ENCODE measurements at regions of chr1 and their contacts with region 1.

Region 1: DNA sequence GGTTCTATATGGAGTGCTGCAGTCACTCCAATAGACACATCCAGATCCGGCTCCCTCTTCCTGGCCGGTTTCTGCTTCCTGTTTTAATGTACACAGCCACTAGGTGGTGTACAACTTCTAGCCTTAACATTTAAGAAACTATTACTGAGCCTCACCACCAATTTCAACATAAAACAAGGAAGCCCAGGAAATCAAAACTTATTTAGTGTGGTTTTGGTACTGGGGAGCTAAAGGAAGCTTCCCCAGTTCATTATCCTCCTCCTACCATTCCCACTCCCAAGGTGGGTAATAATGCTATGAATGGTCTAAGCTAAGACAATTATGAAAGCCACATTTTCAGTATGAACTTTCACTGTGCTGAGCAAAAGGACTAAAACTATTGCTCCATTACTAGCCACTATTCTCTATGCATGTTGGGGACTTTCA is 25.5 kb upstream of the MTMR11 start:
- DNase-seq: peak; percentile 65
- H3K4me3 ChIP-seq: no peak overlapping the region
- H3K27ac ChIP-seq: no peak overlapping the region
- H3K4me1 ChIP-seq: no peaks in the 10 kb centered on the region
- H3K27me3 ChIP-seq: no peaks in the 10 kb centered on the region
- CTCF ChIP-seq: peak; percentile 63 to 72

Region 2: DNA sequence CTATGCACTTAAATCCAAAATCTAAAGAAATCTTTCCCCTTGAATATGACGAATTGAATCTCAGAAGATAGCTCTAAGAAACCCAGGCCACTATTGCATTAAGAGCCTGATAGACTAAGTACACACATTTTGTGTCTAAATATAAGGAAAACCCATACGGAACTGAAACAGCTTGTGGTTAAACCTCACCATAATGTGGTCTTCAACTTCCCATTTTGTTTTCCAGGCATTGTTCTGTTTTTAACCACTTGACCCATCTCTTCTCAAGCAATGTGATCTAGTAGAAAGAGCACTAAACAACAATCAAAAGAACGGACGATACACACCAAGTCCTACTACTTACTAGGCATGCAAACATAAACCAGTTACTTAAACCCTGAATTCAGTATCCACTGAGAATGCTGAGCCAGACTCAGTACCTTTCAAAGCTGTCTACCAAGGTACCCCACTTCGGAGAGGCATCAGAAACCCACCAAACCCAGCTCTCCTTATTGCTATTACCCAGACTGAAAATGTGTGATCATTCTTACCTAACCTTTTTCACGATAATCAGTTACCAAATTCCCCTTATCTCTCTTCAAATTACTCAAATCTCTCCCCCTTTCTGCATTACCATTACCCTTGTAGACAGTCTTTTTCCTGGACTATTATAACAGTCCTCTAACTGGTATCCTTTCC is 35.6 kb after region 1 on chr1:
- CTCF ChIA-PET with region 1: no interaction called
- dilution Hi-C with region 1: loop called (anchors 5 kb)
- in situ Hi-C with region 1: no loop called
- intact Hi-C with region 1: no loop called
- DNase-seq: no peak
- H3K4me3 ChIP-seq: no peak overlapping the region
- H3K27ac ChIP-seq: no peak overlapping the region
- H3K4me1 ChIP-seq: peaks cover 21% of the 10 kb centered on the region
- H3K27me3 ChIP-seq: no peaks in the 10 kb centered on the region
- CTCF ChIP-seq: no peak

Region 3: DNA sequence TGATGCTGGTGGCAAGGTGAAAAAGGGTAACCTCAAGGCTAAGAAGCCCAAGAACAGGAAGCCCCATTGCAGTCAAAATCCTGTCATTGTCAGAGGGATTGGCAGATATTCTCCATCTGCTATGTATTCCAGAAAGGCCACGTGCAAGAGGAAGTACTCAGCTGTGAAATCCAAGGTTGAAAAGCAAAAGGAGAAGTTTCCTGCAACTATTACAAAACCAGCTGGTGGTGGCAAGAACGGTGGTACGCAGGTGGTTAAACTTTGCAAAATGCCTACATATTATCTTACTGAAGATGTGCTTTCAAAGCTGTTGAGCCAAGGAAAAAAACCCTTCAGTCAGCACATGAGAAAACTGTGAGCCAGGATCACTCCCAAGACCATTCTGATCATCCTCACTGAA is 91.8 kb after region 1 on chr1:
- CTCF ChIA-PET with region 1: interaction called, 11 read pairs
- dilution Hi-C with region 1: no loop called
- in situ Hi-C with region 1: loop called (anchors 5 kb)
- intact Hi-C with region 1: loop called (anchors 1 kb)
- DNase-seq: no peak
- H3K4me3 ChIP-seq: no peak overlapping the region
- H3K27ac ChIP-seq: no peak overlapping the region
- H3K4me1 ChIP-seq: no peaks in the 10 kb centered on the region
- H3K27me3 ChIP-seq: no peaks in the 10 kb centered on the region
- CTCF ChIP-seq: no peak

Region 4: DNA sequence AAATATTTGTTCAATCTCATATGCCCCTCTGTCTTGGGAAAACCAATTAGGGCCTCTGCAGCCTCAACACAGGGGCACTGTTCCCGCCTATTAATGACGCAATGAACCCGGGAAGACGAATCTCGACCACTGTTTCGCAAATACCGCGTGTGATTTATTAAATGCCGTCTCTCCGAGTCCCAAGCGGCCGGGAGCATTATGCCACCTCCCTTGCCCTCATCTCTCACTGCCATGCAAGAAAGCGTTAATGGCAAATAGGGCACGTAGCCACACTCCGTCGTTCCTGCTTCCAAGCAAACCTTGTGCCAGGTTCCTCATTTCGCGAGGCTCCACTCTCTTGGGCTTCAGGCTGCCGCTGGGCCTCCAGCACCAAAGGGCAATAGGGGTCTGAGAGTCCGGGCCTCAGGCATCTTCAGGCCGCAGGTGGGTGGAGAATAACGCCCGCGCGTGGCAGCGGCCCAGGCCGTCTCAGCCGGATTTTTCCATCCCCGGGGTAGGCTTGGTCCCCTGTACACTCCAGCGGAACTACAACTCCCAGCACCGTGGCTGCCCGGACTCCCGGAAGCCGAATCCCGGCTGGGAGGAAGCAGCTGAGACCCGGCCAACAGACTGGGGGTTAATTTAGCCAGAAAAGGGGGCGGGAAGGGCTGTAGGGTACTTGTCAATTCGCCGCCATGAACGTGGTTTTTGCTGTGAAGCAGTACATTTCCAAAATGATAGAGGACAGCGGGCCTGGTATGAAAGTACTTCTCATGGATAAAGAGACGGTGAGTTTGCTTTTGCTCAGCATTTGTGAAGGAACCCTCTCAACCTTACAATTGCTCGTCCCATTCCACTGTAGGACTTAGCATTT is 105.3 kb after region 1 on chr1 and contains the start of gene VPS45:
- CTCF ChIA-PET with region 1: interaction called, 4 read pairs
- dilution Hi-C with region 1: loop called (anchors 5 kb)
- in situ Hi-C with region 1: no loop called
- intact Hi-C with region 1: loop called (anchors 5 kb)
- DNase-seq: peak; percentile 86
- H3K4me3 ChIP-seq: peak within 1 kb of the TSS; percentile 68 to 81 (median 73)
- H3K27ac ChIP-seq: peak within 1 kb of the TSS; percentile 83
- H3K4me1 ChIP-seq: peaks cover 15% of the 10 kb centered on the region
- H3K27me3 ChIP-seq: no peaks in the 10 kb centered on the region
- CTCF ChIP-seq: no peak
- total RNA-seq, gene VPS45: 30.0 to 42.2 TPM

Region 5: DNA sequence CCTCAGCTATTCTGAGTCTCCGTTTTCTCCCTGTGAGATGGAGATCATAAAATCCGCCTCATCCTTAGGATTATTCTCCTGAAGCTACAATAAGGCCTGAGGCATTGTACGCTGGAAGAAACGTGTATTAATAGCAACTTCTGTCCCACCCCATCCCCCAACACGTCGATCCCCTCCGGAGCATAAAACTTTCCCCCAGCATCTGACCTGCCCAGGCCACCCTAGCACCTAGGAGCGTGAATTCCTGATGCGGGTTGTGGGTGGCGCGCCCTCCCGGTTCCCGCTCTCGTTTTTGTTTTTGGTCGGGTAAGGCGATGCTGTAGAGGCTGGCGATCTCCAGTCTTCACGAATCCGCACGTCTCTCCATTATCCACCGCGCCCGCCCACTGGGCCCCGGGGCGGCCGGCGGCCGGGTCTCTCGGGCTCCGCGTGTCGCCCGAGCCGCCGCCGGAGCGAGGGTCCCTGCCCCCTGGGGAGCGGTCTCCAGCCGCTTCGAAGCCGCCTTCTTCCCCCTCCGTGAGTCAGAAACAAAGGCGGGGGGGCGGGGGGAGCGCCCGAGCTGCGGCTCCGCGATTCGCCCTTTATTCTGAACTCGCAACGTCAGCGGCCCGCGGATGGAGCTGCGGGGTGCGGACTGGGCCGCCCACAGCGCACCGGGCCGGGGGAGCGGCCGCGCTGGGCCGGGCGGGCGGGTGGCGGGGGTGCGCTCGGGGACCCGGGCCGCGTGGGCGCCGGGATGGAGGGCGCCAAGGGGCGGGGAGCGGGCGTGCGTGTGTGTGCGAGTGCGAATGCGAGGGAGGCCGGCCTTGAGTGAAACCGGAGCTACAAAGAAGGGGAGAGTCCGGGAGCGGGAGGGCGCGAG is 187.4 kb after region 1 on chr1 and contains the start of gene PLEKHO1:
- CTCF ChIA-PET with region 1: no interaction called
- dilution Hi-C with region 1: no loop called
- in situ Hi-C with region 1: no loop called
- intact Hi-C with region 1: no loop called
- DNase-seq: peak; percentile 71
- H3K4me3 ChIP-seq: peak within 1 kb of the TSS; percentile 58 to 61 (median 60)
- H3K27ac ChIP-seq: no peak within 1 kb of the TSS
- H3K4me1 ChIP-seq: peaks cover 7% of the 10 kb centered on the region
- H3K27me3 ChIP-seq: no peaks in the 10 kb centered on the region
- CTCF ChIP-seq: no peak
- total RNA-seq, gene PLEKHO1: 3.1 to 3.3 TPM

Region 6: GRCh38 chr1:150168960-150169601 is 206.9 kb after region 1 on chr1:
- CTCF ChIA-PET with region 1: no interaction called
- dilution Hi-C with region 1: no loop called
- in situ Hi-C with region 1: no loop called
- intact Hi-C with region 1: loop called (anchors 1 kb)
- DNase-seq: peak; percentile 24
- H3K4me3 ChIP-seq: no peak overlapping the region
- H3K27ac ChIP-seq: no peak overlapping the region
- H3K4me1 ChIP-seq: no peaks in the 10 kb centered on the region
- H3K27me3 ChIP-seq: no peaks in the 10 kb centered on the region
- CTCF ChIP-seq: peak; percentile 83 to 84

Region 7: DNA sequence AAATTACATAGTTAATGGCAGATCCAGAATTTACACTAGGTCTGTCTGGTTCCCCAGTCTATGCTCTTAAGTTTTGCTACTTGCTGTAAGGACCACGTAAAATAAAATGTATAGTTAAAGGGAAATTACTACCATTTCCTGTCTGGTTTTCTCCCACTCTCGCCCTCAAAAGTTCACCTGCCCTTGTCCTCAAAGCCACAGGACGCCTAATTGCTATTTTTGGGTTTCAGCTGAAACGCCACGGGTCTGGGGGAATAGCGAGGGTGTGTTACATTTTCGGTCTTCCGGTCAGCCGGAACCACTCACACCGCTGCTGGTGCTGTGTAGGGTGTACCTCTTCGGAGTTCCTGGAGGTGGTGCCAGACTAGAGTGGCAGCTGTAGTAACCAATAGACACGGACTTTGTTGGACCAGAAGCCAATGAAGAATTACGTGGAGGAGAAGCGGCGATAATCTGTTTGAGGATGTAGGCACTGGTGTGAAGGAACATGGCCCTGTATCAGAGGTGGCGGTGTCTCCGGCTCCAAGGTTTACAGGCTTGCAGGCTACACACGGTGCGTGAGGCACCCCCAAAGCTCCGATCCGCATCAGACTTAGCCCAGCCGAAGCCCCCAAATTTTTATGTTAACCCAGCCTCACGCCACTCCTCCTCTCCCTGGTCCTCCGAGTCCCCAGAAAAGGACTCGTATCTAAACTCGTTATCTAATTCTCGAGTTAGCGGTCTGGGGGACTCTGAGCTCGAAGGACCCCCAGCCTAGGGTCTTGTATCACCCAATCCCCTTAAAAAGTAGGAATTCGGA is 525.0 kb after region 1 on chr1 and contains the start of gene TARS2:
- CTCF ChIA-PET with region 1: no interaction called
- dilution Hi-C with region 1: no loop called
- in situ Hi-C with region 1: no loop called
- intact Hi-C with region 1: no loop called
- DNase-seq: peak; percentile 97
- H3K4me3 ChIP-seq: peak within 1 kb of the TSS; percentile 66 to 81 (median 69)
- H3K27ac ChIP-seq: peak within 1 kb of the TSS; percentile 83
- H3K4me1 ChIP-seq: peaks cover 16% of the 10 kb centered on the region
- H3K27me3 ChIP-seq: no peaks in the 10 kb centered on the region
- CTCF ChIP-seq: peak in 1 of 2 donors; percentile 29
- total RNA-seq, gene TARS2: 23.3 to 27.0 TPM

Measured in mammary epithelial cell (primary cell).